ENCODE measurements at regions of chr9 and their contacts with region 1.

Region 1: DNA sequence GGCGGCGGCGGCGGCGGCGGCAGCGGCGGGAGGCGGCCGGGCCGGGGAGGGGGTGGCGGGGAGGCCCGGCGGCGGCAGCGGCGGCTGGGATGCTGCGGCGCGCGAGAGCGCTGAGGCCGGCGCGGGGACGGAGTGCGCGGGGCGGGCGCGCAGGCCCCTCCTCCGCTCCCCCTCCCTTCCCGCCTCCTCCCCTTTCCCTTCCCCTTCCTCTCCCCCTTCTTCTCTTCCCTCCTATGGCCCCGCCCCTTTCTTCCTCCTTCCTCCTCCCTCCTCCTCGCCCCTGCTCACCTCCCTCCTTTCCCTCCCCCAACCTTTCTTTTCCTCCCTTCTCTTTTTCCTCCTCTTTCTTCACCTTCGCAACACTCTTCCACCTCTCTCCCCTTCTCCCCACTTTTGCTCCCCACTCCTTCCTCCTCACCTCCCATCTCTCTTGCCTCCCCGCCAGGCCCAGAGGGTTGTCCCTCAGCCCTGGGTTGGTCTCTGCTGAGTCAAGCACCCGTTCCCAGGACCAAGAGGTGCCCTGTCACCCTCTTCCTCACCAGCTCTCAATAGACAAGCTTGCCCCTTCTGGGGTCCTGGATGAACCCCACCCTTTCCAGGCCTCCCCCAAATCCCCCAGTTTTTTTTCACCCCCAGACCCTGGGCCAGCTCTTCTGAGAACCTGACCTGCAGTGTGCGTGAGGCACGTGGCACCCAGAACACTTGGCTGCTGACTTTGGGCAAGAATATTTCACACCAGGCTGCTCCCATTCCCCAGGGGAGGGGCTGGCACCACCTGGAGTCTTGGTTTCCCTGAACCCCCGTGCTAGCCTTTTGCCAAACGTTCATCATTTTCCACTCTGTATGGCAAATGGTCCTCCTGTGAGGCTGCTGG is at the start of gene SEMA4D:
- DNase-seq: peak in 1 of 2 experiments; percentile 71
- H3K4me3 ChIP-seq: peak within 1 kb of the TSS; percentile 83
- H3K27ac ChIP-seq: no peak within 1 kb of the TSS
- H3K4me1 ChIP-seq: peaks cover 11% of the 10 kb centered on the region; the same call in 1 of the 2 replicates
- H3K27me3 ChIP-seq: no peaks in the 10 kb centered on the region
- CTCF ChIP-seq: no peak
- total RNA-seq, gene SEMA4D: 48.4 and 58.3 TPM in 2 replicates

Region 2: DNA sequence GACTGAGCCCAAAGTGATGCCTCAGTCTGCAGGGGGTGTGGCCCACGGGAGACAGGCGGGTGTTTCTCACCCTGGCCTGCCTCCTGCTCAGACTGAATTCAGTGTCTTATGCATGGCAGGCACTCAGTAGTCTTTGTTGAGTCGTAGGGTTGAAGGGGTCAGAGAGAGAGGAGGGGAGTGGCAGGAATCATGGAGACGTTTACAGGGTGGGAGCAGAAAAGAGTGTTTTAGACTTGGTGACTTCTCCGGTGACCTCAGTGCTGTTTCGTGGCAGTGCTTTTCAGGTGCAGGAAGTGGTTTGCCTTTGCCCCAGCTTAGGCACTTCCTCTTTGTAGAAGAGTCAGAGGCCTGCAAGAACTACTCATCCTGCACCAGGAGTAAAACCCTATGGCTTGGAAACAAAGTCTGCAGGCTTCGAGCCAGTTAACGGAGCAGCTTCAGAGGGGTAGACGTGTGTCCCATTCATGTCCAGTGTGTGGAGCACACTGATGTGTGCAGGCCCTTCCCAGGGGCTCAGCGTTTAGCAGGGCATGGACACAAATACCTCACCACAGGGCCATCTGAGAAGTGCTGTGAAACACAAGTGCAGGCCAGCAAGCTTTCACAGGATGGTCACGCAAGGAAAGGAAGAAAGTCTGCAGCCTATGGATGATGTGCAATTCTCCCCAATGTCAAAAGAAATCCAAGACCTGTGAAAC is 24.2 kb after region 1 on chr9:
- CTCF ChIA-PET with region 1: no interaction called
- POLR2A ChIA-PET with region 1: no interaction called
- intact Hi-C with region 1: loop called (anchors 1 kb)
- DNase-seq: no peak
- H3K4me3 ChIP-seq: no peak overlapping the region
- H3K27ac ChIP-seq: no peak overlapping the region
- H3K4me1 ChIP-seq: peaks cover 52% of the 10 kb centered on the region
- H3K27me3 ChIP-seq: no peaks in the 10 kb centered on the region
- CTCF ChIP-seq: no peak

Region 3: GRCh38 chr9:89549031-89549644 is 50.9 kb after region 1 on chr9:
- CTCF ChIA-PET with region 1: no interaction called
- POLR2A ChIA-PET with region 1: no interaction called
- intact Hi-C with region 1: no loop called
- DNase-seq: peak in 1 of 2 experiments; percentile 75
- H3K4me3 ChIP-seq: no peak overlapping the region
- H3K27ac ChIP-seq: no peak overlapping the region
- H3K4me1 ChIP-seq: no peaks in the 10 kb centered on the region
- H3K27me3 ChIP-seq: peaks cover 5% of the 10 kb centered on the region; the same call in 1 of the 2 replicates
- CTCF ChIP-seq: peak; percentile 88

Measured in PC-9 (cell line).